H1 (cell line): ENCODE measurements at regions of chr14 and their contacts with region 1.

Region 1: DNA sequence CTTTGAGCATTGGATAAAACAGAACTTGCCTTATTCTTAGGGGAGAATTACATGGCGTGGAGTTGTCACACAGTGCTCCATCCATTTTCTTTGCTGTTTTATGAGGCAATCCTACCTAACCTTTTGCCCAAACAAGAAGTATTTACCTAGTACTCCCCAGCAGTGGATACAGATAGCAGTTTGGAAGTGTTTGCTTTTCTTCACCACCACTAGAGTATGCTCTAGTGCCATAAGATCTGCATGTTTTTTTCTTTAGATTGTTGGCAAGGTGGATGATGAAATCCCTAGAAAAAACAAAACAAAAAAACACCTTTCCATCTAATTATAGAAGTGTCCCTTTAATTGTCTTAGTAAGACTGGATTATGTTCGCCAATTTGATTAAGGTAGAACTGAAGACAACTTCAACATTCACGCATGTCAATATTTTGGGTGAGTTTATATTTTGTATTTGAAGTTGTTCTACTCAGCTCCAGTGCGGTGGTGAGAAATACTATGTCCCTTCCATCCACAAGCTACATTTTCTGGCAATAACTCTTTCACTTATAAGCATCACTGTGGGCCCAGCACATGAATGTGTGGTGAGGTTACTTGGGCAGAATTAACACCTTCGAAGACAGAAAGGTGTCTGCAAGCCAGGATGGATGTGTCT is 23.6 kb upstream of the TMEM260 start:
- DNase-seq: no peak
- H3K4me3 ChIP-seq: no peak overlapping the region
- H3K27ac ChIP-seq: no peak overlapping the region
- H3K4me1 ChIP-seq: peaks cover 0 to 4% (median 0%) of the 10 kb centered on the region in 4 experiments; a peak in 1 of 7 replicates
- H3K27me3 ChIP-seq: no peaks in the 10 kb centered on the region
- CTCF ChIP-seq: peak in 2 of 3 experiments; percentile 51 to 77; a peak in 3 of 4 replicates
- EP300 ChIP-seq: no peak
- POLR2A ChIP-seq: no peak
- RAD21 ChIP-seq: peak; percentile 88 to 89

Region 2: DNA sequence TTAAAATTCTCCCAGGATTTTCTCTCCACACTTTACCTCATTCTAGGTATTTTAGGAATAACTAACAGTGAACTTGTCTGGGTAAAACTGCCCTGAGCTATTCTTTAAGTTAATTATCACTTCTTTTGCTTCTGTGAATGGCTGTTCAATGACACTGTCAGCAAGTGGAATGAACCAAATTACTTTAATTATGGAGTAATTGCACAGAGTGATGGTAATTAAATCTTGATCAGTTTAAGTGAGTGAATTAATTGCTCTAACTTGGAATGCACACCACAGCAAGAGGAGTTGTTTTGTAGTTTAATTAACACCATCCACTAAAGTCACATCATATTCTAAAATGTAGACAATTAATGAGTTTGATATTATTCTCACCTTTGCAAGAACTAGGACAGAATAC is 12.6 kb before region 1 on chr14:
- CTCF ChIA-PET with region 1: interaction called, 17 read pairs
- POLR2A ChIA-PET with region 1: no interaction called
- DNase-seq: no peak
- H3K4me3 ChIP-seq: no peak overlapping the region
- H3K27ac ChIP-seq: no peak overlapping the region
- H3K4me1 ChIP-seq: no peaks in the 10 kb centered on the region
- H3K27me3 ChIP-seq: no peaks in the 10 kb centered on the region
- CTCF ChIP-seq: no peak
- EP300 ChIP-seq: no peak
- POLR2A ChIP-seq: no peak
- RAD21 ChIP-seq: no peak

Region 3: GRCh38 chr14:56603648-56604047 is 47.6 kb after region 1 on chr14:
- CTCF ChIA-PET with region 1: no interaction called
- POLR2A ChIA-PET with region 1: no interaction called
- DNase-seq: no peak
- H3K4me3 ChIP-seq: no peak overlapping the region
- H3K27ac ChIP-seq: no peak overlapping the region
- H3K4me1 ChIP-seq: no peaks in the 10 kb centered on the region
- H3K27me3 ChIP-seq: peaks cover 0 to 1% (median 0%) of the 10 kb centered on the region in 4 experiments; a peak in 1 of 7 replicates
- CTCF ChIP-seq: no peak
- EP300 ChIP-seq: no peak
- POLR2A ChIP-seq: no peak
- RAD21 ChIP-seq: no peak